ENCODE measurements at regions of chr2 and their contacts with region 1.

Region 1: DNA sequence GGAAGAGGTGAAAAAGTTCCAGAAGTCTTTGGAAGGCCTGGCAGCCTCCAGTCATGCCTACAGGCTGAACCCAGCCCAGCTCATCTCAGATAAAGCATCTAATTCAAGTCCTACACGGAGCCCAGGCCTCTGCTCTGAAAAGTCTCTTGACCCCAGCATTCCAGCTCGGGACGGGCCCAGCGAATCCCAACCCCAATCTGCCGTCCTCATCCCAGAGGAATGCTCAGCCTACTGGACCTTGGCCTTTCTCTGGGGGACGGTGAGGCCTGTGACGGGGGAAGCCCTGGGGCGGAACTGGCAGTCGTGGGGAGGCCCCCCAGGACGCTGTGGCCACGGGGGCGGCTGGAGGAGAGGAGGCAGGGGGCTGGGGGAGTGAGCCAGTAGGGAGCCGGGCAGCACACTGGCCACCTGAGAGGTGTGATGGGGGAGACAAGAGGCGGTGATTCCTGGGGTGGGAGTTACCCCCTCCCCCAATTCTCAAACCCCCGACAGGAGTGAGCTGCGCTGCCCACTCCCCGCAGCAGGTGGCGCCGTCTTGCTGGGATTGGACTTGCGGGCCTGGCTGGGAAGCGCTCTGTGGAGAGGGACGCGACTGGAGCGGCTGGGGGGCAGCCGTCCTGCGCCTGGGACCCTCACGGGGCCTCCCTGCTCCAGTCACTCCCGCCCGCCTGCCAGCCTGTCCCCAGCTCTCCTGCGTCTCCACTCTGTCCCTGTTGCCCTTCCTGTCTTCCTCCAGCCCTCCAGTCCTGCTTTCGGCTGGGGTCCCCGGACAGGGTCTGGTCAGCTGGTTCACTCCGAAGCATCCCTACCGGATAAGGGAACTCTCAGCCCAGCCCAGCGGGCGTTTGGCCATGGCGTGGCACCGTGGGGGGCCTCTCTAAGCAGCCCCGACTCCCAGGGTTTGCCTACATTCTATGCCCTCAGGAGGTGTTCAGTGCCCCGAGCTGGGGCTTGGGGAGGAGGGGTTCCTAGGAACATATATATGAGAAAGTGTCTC is 182.6 kb upstream of the HAAO start:
- DNase-seq: peak; percentile 95
- H3K4me3 ChIP-seq: peak overlapping the region; percentile 27 to 32; a peak in 3 of 4 replicates
- H3K27ac ChIP-seq: no peak overlapping the region; a peak in 1 of 4 replicates
- H3K4me1 ChIP-seq: peaks cover 11 to 14% of the 10 kb centered on the region in 2 experiments; a peak in 3 of 4 replicates
- H3K27me3 ChIP-seq: no peaks in the 10 kb centered on the region
- CTCF ChIP-seq: peak; percentile 95
- EP300 ChIP-seq: no peak
- RAD21 ChIP-seq: peak; percentile 97

Region 2: GRCh38 chr2:42169100-42169873 is 805.7 kb before region 1 on chr2 and contains the start of gene EML4:
- CTCF ChIA-PET with region 1: no interaction called
- POLR2A ChIA-PET with region 1: no interaction called
- DNase-seq: peak; percentile 98
- H3K4me3 ChIP-seq: peak within 1 kb of the TSS; percentile 81 to 100
- H3K27ac ChIP-seq: peak within 1 kb of the TSS; percentile 72 to 92
- H3K4me1 ChIP-seq: peaks cover 16 to 24% of the 10 kb centered on the region in 2 experiments; a peak in 3 of 4 replicates
- H3K27me3 ChIP-seq: no peaks in the 10 kb centered on the region
- CTCF ChIP-seq: no peak
- EP300 ChIP-seq: no peak
- RAD21 ChIP-seq: 0 out of 2 replicates have a peak, but pooled peaks have one; percentile 8
- polyA plus RNA-seq, gene EML4: 35.0 and 45.8 TPM in 2 replicates

Region 3: DNA sequence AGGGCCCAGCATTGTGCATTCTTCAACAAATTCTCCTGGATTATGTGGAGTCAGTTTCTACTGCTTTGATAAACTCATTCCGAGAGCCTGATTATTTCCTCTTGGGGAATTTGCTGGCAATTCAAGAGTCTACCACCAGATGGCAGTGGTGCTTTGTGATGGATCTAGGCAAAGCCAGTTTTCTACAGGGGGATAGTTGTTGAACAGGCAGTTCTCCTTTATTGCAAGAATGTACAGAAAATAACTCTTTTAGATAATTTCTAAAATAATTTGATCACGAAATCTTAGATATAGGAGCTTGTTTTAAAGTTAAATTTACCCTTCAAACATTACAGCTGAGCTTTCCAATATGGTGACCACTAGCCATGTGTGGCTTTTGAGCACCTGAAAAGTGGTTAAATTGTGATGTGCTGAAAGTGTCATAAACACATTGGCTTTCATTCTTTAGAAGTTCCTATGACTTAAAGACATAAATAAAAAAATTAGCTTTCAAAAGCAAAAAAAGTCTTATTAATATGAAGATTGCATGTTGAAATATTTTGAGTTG is 115.9 kb before region 1 on chr2:
- CTCF ChIA-PET with region 1: interaction called, 18 read pairs
- POLR2A ChIA-PET with region 1: no interaction called
- DNase-seq: peak; percentile 86
- H3K4me3 ChIP-seq: no peak overlapping the region
- H3K27ac ChIP-seq: no peak overlapping the region
- H3K4me1 ChIP-seq: peaks cover 0 to 22% of the 10 kb centered on the region in 2 experiments; a peak in 1 of 4 replicates
- H3K27me3 ChIP-seq: no peaks in the 10 kb centered on the region
- CTCF ChIP-seq: peak; percentile 98
- EP300 ChIP-seq: no peak
- RAD21 ChIP-seq: peak; percentile 98

Region 4: DNA sequence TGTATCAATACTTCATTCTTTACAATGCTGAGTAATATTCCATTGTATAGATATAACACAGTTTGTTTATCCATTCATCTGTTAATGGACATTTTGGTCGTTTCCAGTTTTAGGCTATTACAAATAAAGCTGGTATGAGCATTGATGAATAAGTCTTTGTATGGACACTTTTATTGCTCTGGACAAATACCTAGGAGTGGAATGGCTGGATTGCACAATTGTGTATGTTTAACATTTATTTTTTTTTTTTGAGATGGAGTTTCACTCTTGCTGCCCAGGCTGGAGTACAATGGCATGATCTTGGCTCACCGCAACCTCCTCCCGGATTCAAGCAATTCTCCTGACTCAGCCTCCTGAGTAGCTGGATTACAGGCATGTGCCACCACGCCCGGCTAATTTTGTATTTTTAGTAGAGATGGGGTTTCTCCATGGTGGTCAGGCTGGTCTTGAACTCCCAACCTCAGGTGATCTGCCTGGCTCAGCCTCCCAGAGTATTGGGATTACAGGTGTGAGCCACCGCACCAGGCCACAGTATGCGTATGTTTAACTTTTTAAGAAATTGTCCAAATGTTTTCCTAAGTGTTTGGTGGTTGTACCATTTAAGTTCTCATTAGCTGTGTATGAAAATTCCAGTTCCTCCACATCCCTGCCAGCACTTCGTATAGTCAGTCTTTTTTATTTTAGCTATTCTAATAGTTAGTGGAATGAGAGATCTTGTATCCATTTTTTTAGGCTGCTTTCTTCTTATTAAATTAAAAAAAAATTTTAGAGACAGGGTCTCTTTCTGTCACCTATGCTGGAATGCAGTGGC is 12.3 kb after region 1 on chr2:
- CTCF ChIA-PET with region 1: interaction called, 17 read pairs
- POLR2A ChIA-PET with region 1: no interaction called
- DNase-seq: no peak
- H3K4me3 ChIP-seq: no peak overlapping the region
- H3K27ac ChIP-seq: no peak overlapping the region
- H3K4me1 ChIP-seq: peaks cover 0 to 10% of the 10 kb centered on the region in 2 experiments; a peak in 1 of 4 replicates
- H3K27me3 ChIP-seq: no peaks in the 10 kb centered on the region
- CTCF ChIP-seq: no peak
- EP300 ChIP-seq: no peak
- RAD21 ChIP-seq: no peak

Region 5: DNA sequence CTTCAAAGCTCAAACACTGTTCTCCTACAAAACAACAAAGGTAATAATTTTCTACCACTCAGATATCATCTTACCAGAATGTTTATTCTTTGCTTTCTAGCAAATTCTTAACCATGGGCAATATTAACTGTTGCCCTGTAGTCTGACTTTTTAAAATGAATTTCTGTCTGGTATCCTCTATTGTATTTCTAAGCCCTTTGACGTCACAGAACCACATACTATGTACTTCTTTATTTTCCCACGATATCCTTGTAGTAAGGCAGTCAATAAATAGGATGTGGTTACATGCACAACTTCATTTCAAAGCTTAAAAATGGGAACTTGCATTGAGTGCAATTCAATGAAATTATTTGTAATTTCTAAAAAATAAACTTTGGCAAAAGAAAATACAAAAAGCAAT is 562.1 kb after region 1 on chr2:
- CTCF ChIA-PET with region 1: interaction called, 41 read pairs
- POLR2A ChIA-PET with region 1: no interaction called
- DNase-seq: no peak
- H3K4me3 ChIP-seq: no peak overlapping the region
- H3K27ac ChIP-seq: no peak overlapping the region
- H3K4me1 ChIP-seq: peaks cover 8 to 13% of the 10 kb centered on the region in 2 experiments
- H3K27me3 ChIP-seq: no peaks in the 10 kb centered on the region
- CTCF ChIP-seq: no peak
- EP300 ChIP-seq: no peak
- RAD21 ChIP-seq: no peak

Region 6: GRCh38 chr2:43576981-43577892 is 602.2 kb after region 1 on chr2:
- CTCF ChIA-PET with region 1: interaction called, 22 read pairs
- POLR2A ChIA-PET with region 1: no interaction called
- DNase-seq: peak; percentile 49
- H3K4me3 ChIP-seq: no peak overlapping the region
- H3K27ac ChIP-seq: peak overlapping the region in 1 of 2 experiments; percentile 57; a peak in 1 of 4 replicates
- H3K4me1 ChIP-seq: no peaks in the 10 kb centered on the region
- H3K27me3 ChIP-seq: no peaks in the 10 kb centered on the region
- CTCF ChIP-seq: peak; percentile 99
- EP300 ChIP-seq: no peak
- RAD21 ChIP-seq: peak; percentile 68